ENCODE measurements at regions of chr17 and their contacts with region 1.

Region 1: GRCh38 chr17:74305865-74306654 is 20.0 kb upstream of the KIF19 start:
- DNase-seq: peak in 1 of 10 donors; percentile 27
- H3K4me3 ChIP-seq: no peak overlapping the region
- H3K27ac ChIP-seq: peak overlapping the region in 10 of 59 donors; percentile 7 to 73 (median 45)
- H3K27me3 ChIP-seq: no peaks in the 10 kb centered on the region
- CTCF ChIP-seq: peak in 54 of 56 donors; percentile 6 to 80 (median 46)

Region 2: DNA sequence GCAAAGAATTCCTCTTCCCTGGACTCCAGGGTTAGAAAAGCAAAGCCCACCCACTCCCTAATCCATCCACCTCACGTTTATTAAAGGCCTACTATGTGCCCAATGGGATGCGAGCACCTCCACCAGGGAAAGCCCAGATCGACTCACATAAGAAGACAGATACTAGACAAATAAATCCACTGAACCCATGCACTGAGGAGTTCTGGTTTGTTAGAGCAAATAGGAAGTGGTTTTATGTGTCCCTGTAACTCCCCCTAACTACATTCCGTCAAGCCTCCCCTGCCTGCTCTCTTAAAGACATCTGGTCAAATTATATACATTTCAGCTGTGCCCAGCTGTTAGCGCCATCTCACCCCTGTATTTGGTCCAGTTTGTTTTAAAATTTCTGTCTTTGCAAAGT is 321.1 kb before region 1 on chr17:
- intact Hi-C with region 1: no loop called
- DNase-seq: peak in 1 of 10 donors; percentile 2
- H3K4me3 ChIP-seq: no peak overlapping the region
- H3K27ac ChIP-seq: no peak overlapping the region
- H3K27me3 ChIP-seq: peaks cover 0 to 2% (median 0%) of the 10 kb centered on the region in 45 donors
- CTCF ChIP-seq: no peak

Region 3: GRCh38 chr17:74361230-74362068 is 55.4 kb after region 1 on chr17 and contains the start of gene BTBD17:
- intact Hi-C with region 1: loop called (anchors 1 to 2 kb)
- DNase-seq: peak; percentile 28 to 82 (median 70)
- H3K4me3 ChIP-seq: peak within 1 kb of the TSS in 25 of 59 donors; percentile 2 to 46 (median 14)
- H3K27ac ChIP-seq: peak within 1 kb of the TSS in 49 of 59 donors; percentile 8 to 85 (median 59)
- H3K27me3 ChIP-seq: peaks cover 0 to 27% (median 7%) of the 10 kb centered on the region in 45 donors
- CTCF ChIP-seq: peak in 55 of 56 donors; percentile 58 to 95 (median 77)
- total RNA-seq, gene BTBD17: 0.28 to 6.4 (median 1.6) TPM

Region 4: GRCh38 chr17:74493381-74493833 is 187.3 kb after region 1 on chr17:
- intact Hi-C with region 1: loop called in 1 of 2 experiments (anchors 5 kb)
- DNase-seq: peak; percentile 57 to 85 (median 72)
- H3K4me3 ChIP-seq: no peak overlapping the region
- H3K27ac ChIP-seq: no peak overlapping the region
- H3K27me3 ChIP-seq: no peaks in the 10 kb centered on the region
- CTCF ChIP-seq: peak; percentile 68 to 95 (median 88)